Gastrocnemius medialis (tissue), 4 donors: ENCODE measurements at regions of chr10 and their contacts with region 1.

Region 1: GRCh38 chr10:72524489-72524888 is 101.4 kb downstream of the MICU1 start:
- DNase-seq: no peak
- ATAC-seq: no peak
- H3K4me3 ChIP-seq: no peak overlapping the region
- H3K27ac ChIP-seq: no peak overlapping the region
- H3K4me1 ChIP-seq: no peaks in the 10 kb centered on the region
- H3K27me3 ChIP-seq: no peaks in the 10 kb centered on the region
- CTCF ChIP-seq: no peak
- POLR2A ChIP-seq: no peak

Region 2: GRCh38 chr10:72539137-72539536 is 14.6 kb after region 1 on chr10:
- in situ Hi-C with region 1: no loop called
- intact Hi-C with region 1: loop called (anchors 1 kb)
- DNase-seq: no peak
- ATAC-seq: no peak
- H3K4me3 ChIP-seq: no peak overlapping the region
- H3K27ac ChIP-seq: no peak overlapping the region
- H3K4me1 ChIP-seq: peaks cover 0 to 3% of the 10 kb centered on the region in 2 donors
- H3K27me3 ChIP-seq: no peaks in the 10 kb centered on the region
- CTCF ChIP-seq: no peak
- POLR2A ChIP-seq: no peak